ENCODE measurements at regions of chr9 and their contacts with region 1.

Region 1: GRCh38 chr9:21789541-21790037 is 12.8 kb upstream of the MTAP start:
- DNase-seq: peak; percentile 67
- ATAC-seq: peak; percentile 99
- H3K4me3 Mint-ChIP-seq: peak overlapping the region; percentile 60
- H3K27ac Mint-ChIP-seq: peak overlapping the region; percentile 77
- H3K4me1 Mint-ChIP-seq: peaks cover 5% of the 10 kb centered on the region
- H3K27me3 Mint-ChIP-seq: peaks cover 9% of the 10 kb centered on the region

Region 2: GRCh38 chr9:21210311-21210710 is 579.3 kb before region 1 on chr9:
- CTCF ChIA-PET with region 1: no interaction called
- POLR2A ChIA-PET with region 1: no interaction called
- intact Hi-C with region 1: loop called in 1 of 2 experiments (anchors 1 kb)
- DNase-seq: no peak
- ATAC-seq: no peak
- H3K4me3 Mint-ChIP-seq: no peak overlapping the region
- H3K27ac Mint-ChIP-seq: no peak overlapping the region
- H3K4me1 Mint-ChIP-seq: peaks cover 8% of the 10 kb centered on the region
- H3K27me3 Mint-ChIP-seq: peaks cover 14% of the 10 kb centered on the region

Region 3: DNA sequence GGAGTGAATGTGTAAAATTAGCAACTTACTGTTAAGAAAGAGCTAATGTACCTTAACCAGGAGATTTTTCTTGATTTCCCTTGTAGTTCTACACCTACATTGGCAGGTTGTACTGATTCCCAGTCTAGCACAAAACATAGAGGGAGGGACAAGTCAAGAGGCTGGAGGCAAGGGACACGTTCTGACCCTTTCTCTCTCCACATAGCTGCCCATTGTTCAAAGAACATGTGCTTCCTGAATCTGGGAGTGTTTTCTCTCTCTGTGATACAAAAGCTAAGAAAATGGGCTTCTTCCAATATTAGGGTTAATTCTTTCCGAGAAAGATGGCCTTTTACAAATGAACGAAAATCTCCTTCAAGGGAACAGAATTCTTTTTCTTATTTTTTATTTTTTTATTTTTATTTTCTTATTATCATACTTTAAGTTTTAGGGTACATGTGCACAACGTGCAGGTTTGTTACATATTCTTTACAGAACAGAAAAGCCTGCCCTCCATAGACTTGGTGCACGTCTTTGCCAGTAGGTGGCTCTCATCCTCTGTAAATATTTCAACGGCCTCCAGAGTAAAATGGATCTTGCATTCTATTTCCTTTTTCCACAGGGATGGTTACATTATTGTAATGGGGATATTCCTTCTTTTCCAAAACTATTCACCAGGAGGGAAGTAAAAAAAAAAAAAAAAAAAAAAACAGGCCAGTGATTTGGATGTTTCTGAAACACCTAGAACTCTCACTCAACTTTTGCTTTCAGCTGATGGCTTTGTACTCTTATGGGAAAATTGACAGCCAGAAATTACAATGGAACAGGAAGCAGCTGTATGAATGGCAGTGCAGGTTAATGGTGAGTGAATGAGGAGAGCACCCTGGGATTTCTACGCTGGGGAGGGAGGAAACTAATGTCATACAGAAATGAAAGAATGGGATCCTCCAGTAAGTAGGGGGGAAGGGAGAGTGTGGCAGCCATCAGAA is 471.3 kb before region 1 on chr9:
- CTCF ChIA-PET with region 1: interaction called, 8 read pairs
- POLR2A ChIA-PET with region 1: no interaction called
- intact Hi-C with region 1: loop called (anchors 1 to 2 kb)
- DNase-seq: peak; percentile 59
- ATAC-seq: peak; percentile 78
- H3K4me3 Mint-ChIP-seq: no peak overlapping the region
- H3K27ac Mint-ChIP-seq: no peak overlapping the region
- H3K4me1 Mint-ChIP-seq: peaks cover 5% of the 10 kb centered on the region
- H3K27me3 Mint-ChIP-seq: no peaks in the 10 kb centered on the region

Region 4: DNA sequence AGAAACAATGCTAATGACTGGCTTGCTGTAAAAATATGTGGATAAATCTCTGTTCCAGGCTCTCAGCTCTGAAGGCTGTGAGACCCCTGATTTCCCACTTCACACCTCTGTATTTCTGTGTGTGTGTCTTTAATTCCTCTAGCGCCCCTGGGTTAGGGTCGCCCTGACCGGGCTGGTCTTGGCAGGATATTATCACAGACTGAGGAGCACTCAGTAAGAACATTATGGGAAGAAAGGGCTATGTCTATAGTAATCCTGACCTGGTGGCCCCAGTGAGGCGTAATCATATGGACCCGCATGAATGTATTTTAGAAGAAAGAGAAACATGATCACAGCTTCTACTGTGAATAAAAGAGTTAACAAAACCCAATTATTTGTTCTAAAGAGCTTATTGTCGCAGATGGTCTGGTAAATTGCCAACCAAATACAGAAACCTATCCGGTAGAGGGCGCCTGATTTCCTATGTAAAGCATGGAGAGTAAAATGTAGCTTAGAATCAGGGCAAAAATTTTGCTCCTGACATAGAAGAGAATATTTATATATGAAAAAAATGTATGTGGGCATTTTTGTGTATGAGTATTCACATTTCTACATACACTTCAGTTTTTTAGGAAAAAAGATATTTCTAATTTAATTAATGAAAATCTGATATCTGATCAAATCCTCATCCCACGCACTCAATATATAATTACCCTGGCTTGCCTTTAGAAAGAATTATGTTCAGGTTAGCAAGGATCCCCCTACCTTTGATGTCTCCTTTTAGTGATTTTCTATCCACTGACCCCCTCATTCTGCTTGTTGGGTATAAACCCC is 355.2 kb before region 1 on chr9:
- CTCF ChIA-PET with region 1: interaction called, 10 read pairs
- POLR2A ChIA-PET with region 1: no interaction called
- intact Hi-C with region 1: loop called in 1 of 2 experiments (anchors 1 kb)
- DNase-seq: peak; percentile 64
- ATAC-seq: no peak
- H3K4me3 Mint-ChIP-seq: no peak overlapping the region
- H3K27ac Mint-ChIP-seq: no peak overlapping the region
- H3K4me1 Mint-ChIP-seq: no peaks in the 10 kb centered on the region
- H3K27me3 Mint-ChIP-seq: peaks cover 19% of the 10 kb centered on the region

Region 5: DNA sequence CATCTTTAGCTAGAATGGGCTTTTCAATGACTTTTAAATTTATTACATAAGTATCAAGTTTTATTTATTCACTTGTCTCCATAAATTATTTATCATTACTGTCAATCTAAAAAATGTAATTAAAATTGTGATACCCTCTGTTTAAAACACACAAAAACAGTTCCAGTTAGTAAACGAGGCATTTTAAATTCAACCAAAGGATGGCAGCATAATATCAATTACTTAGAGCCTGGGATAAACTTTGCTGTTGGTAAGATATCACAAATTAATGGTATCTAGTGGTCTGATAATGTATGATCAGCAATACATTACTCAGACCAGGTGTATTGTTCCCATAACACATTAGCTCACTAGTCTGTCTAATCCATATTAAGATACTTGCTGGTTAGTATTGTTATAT is 297.8 kb before region 1 on chr9:
- CTCF ChIA-PET with region 1: interaction called, 6 read pairs
- POLR2A ChIA-PET with region 1: no interaction called
- intact Hi-C with region 1: loop called in 1 of 2 experiments (anchors 1 kb)
- DNase-seq: no peak
- ATAC-seq: no peak
- H3K4me3 Mint-ChIP-seq: no peak overlapping the region
- H3K27ac Mint-ChIP-seq: no peak overlapping the region
- H3K4me1 Mint-ChIP-seq: no peaks in the 10 kb centered on the region
- H3K27me3 Mint-ChIP-seq: peaks cover 8% of the 10 kb centered on the region

Region 6: GRCh38 chr9:21576331-21577189 is 213.0 kb before region 1 on chr9:
- CTCF ChIA-PET with region 1: interaction called, 3 read pairs
- POLR2A ChIA-PET with region 1: no interaction called
- intact Hi-C with region 1: loop called in 1 of 2 experiments (anchors 5 kb)
- DNase-seq: peak; percentile 66
- ATAC-seq: peak; percentile 90
- H3K4me3 Mint-ChIP-seq: no peak overlapping the region
- H3K27ac Mint-ChIP-seq: peak overlapping the region; percentile 61
- H3K4me1 Mint-ChIP-seq: peaks cover 32% of the 10 kb centered on the region
- H3K27me3 Mint-ChIP-seq: peaks cover 4% of the 10 kb centered on the region

Region 7: DNA sequence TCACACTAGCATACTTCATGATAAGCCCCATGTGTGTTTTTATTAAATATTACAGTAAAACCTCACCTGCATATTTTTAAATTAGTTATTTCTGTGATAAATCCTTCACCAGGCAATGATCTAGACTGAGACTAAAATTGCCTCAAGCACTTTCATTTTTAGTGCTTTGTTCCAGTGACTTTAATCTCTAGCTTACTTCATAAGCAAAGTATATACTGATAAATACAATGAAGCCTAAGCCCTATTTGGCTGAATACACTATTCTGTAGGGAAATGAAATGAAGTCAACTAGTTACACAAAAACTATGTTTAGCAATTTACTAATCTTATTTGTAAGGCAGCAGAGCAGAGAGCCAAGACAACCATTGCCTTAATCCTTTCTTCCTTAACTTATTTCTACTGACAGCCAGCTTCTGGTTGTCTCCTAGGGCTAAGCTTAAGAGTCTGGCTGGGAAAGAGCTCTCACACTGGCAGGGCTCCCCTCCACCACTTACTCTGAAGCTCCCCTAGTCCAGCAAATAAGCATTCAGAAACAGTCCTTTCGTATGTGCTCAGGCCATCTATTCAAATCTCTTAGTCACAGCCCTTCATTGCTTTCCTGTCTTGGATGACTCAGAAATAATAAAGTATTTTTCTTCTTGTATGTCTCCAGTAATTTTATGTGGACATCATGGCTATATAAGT is 18.6 kb before region 1 on chr9:
- CTCF ChIA-PET with region 1: interaction called, 10 read pairs
- POLR2A ChIA-PET with region 1: no interaction called
- intact Hi-C with region 1: no loop called
- DNase-seq: no peak
- ATAC-seq: peak; percentile 63
- H3K4me3 Mint-ChIP-seq: no peak overlapping the region
- H3K27ac Mint-ChIP-seq: no peak overlapping the region
- H3K4me1 Mint-ChIP-seq: peaks cover 14% of the 10 kb centered on the region
- H3K27me3 Mint-ChIP-seq: peaks cover 17% of the 10 kb centered on the region

Region 8: GRCh38 chr9:22022396-22022795 is 232.8 kb after region 1 on chr9:
- CTCF ChIA-PET with region 1: no interaction called
- POLR2A ChIA-PET with region 1: no interaction called
- intact Hi-C with region 1: no loop called
- DNase-seq: no peak
- ATAC-seq: no peak
- H3K4me3 Mint-ChIP-seq: no peak overlapping the region
- H3K27ac Mint-ChIP-seq: no peak overlapping the region
- H3K4me1 Mint-ChIP-seq: no peaks in the 10 kb centered on the region
- H3K27me3 Mint-ChIP-seq: peaks cover 47% of the 10 kb centered on the region

Measured in activated CD4-positive, alpha-beta T cell treated with anti-CD3 and anti-CD28 coated beads for 36 hours (primary cell).